ENCODE measurements at regions of chr3 and their contacts with region 1.

Region 1: DNA sequence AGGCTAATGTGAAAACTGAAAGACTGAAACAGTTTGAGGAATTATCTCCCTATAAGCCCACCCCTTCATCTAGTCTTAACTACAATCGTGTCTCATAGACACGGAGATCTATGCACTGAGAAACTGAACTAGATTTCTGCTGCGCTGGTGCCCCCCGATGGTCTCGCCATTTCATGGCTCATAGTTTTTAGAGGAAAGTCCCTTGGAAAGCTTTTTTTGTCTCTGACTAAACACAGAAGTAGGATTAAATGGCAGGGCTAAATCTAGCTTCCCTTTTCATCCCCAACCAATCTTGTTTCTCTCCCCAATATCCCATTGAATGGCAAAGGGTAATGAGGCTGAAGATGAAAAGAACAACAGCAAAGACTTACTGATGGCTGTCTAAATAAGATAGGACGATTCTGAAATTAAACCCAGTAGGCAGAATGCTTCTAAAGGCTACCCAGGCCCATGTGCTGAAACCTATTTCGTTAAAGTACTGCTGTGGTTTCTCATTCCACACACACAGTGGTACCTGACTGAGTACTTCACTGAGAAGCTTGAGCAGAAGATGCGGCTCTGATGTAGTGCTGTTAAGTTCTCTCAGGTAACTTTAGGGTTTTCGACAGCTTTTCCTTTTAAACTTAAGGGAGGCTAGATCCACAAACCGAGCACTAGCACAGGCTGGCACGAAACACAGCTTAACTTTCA is 142.7 kb downstream of the GADL1 start:
- DNase-seq: peak; percentile 88
- H3K4me3 Mint-ChIP-seq: no peak overlapping the region
- H3K27ac Mint-ChIP-seq: no peak overlapping the region
- H3K4me1 Mint-ChIP-seq: peaks cover 45% of the 10 kb centered on the region
- H3K27me3 Mint-ChIP-seq: no peaks in the 10 kb centered on the region

Region 2: GRCh38 chr3:30012941-30013543 is 738.7 kb before region 1 on chr3:
- CTCF ChIA-PET with region 1: interaction called, 11 read pairs
- intact Hi-C with region 1: loop called (anchors 1 kb)
- DNase-seq: peak; percentile 72
- H3K4me3 Mint-ChIP-seq: no peak overlapping the region
- H3K27ac Mint-ChIP-seq: no peak overlapping the region
- H3K4me1 Mint-ChIP-seq: no peaks in the 10 kb centered on the region
- H3K27me3 Mint-ChIP-seq: no peaks in the 10 kb centered on the region

Region 3: GRCh38 chr3:30112902-30113484 is 638.8 kb before region 1 on chr3:
- CTCF ChIA-PET with region 1: interaction called, 21 read pairs
- intact Hi-C with region 1: loop called (anchors 1 kb)
- DNase-seq: no peak
- H3K4me3 Mint-ChIP-seq: no peak overlapping the region
- H3K27ac Mint-ChIP-seq: no peak overlapping the region
- H3K4me1 Mint-ChIP-seq: peaks cover 10% of the 10 kb centered on the region
- H3K27me3 Mint-ChIP-seq: no peaks in the 10 kb centered on the region

Region 4: GRCh38 chr3:30319713-30320112 is 432.0 kb before region 1 on chr3:
- CTCF ChIA-PET with region 1: interaction called, 4 read pairs
- intact Hi-C with region 1: loop called (anchors 2 kb)
- DNase-seq: peak; percentile 67
- H3K4me3 Mint-ChIP-seq: no peak overlapping the region
- H3K27ac Mint-ChIP-seq: peak overlapping the region; percentile 26
- H3K4me1 Mint-ChIP-seq: peaks cover 21% of the 10 kb centered on the region
- H3K27me3 Mint-ChIP-seq: no peaks in the 10 kb centered on the region

Region 5: DNA sequence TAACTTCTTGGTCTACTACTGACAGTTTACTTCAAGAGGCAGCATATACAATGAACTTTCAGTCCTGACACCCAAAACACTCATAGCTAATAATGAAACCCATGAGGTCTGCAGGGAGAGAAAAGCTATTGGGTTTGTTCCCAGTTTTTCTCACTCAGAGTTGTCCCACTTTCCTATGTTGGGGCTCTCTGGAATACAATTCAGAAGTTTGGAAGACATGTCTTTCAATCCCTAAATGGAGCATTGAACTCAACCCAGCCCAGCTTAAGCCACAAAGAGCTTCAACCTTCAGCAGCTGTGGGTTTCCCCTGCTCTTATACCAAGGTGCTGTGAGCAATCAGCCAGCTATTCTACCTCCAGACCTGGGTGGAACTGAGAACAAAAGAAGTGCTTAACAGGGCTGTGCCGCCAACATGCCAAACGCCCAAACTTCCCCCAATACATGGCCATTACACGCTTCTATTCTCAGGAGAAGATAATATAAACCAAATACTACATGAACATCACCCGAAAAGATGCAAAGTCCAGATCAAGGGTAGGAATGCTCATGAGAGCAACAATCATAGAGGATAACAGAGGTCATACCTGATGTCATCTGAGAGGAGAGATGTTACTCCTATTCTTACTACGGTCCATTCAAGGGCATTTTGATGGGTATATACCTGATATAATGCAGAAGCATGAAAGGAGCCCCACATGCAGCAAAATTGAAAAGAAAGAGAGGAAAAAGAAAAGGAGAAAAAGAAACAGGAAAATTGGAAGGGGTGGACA is 276.5 kb before region 1 on chr3:
- CTCF ChIA-PET with region 1: no interaction called
- intact Hi-C with region 1: loop called (anchors 2 kb)
- DNase-seq: peak; percentile 64
- H3K4me3 Mint-ChIP-seq: peak overlapping the region; percentile 2
- H3K27ac Mint-ChIP-seq: peak overlapping the region; percentile 14
- H3K4me1 Mint-ChIP-seq: peaks cover 52% of the 10 kb centered on the region
- H3K27me3 Mint-ChIP-seq: no peaks in the 10 kb centered on the region

Region 6: GRCh38 chr3:30567139-30567753 is 184.5 kb before region 1 on chr3:
- CTCF ChIA-PET with region 1: no interaction called
- intact Hi-C with region 1: no loop called
- DNase-seq: no peak
- H3K4me3 Mint-ChIP-seq: no peak overlapping the region
- H3K27ac Mint-ChIP-seq: no peak overlapping the region
- H3K4me1 Mint-ChIP-seq: no peaks in the 10 kb centered on the region
- H3K27me3 Mint-ChIP-seq: no peaks in the 10 kb centered on the region

Region 7: GRCh38 chr3:31041161-31041978 is 289.6 kb after region 1 on chr3:
- CTCF ChIA-PET with region 1: no interaction called
- intact Hi-C with region 1: no loop called
- DNase-seq: no peak
- H3K4me3 Mint-ChIP-seq: no peak overlapping the region
- H3K27ac Mint-ChIP-seq: no peak overlapping the region
- H3K4me1 Mint-ChIP-seq: no peaks in the 10 kb centered on the region
- H3K27me3 Mint-ChIP-seq: no peaks in the 10 kb centered on the region

Region 8: DNA sequence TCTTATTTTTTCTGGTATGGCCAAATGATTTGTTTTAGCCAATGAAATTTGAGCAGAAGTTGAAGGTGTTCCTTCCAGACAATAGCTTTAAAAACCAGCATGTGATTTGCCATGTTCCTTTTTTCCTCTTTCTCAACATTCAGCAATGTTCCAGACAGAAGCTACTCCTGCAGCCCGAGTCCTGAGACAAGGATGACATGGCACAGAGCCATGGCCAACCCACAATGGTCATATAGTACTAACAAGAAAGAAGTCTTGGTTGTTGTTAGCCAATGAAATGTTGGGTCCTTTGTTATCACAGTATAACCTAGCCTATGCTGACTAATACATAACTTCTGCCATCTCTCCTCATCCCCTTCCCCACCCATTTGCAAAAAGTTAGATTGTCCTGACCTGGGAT is 569.9 kb after region 1 on chr3:
- CTCF ChIA-PET with region 1: no interaction called
- intact Hi-C with region 1: no loop called
- DNase-seq: no peak
- H3K4me3 Mint-ChIP-seq: no peak overlapping the region
- H3K27ac Mint-ChIP-seq: no peak overlapping the region
- H3K4me1 Mint-ChIP-seq: no peaks in the 10 kb centered on the region
- H3K27me3 Mint-ChIP-seq: no peaks in the 10 kb centered on the region

Measured in activated naive CD4-positive, alpha-beta T cell treated with anti-CD3 and anti-CD28 coated beads for 36 hours (primary cell).